KBM-7 (cell line): ENCODE measurements at regions of chr15 and their contacts with region 1.

Region 1: GRCh38 chr15:77496710-77497103 is 76.0 kb downstream of the HMG20A start:
- DNase-seq: peak; percentile 94

Region 2: GRCh38 chr15:77186594-77187011 is 310.1 kb before region 1 on chr15:
- in situ Hi-C with region 1: loop called (anchors 25 kb)
- DNase-seq: peak; percentile 61